Heart left ventricle (tissue), 16 donors: ENCODE measurements at regions of chr9 and their contacts with region 1.

Region 1: GRCh38 chr9:136928591-136928990 is 15.9 kb downstream of the FBXW5 start:
- DNase-seq: peak; percentile 64 to 82 (median 67)
- ATAC-seq: peak; percentile 87 to 91 (median 90)
- H3K4me3 ChIP-seq: peak overlapping the region in 6 of 12 donors; percentile 4 to 42 (median 17)
- H3K27ac ChIP-seq: peak overlapping the region; percentile 55 to 96 (median 84)
- H3K4me1 ChIP-seq: peaks cover 11 to 67% (median 53%) of the 10 kb centered on the region in 12 donors
- H3K27me3 ChIP-seq: no peaks in the 10 kb centered on the region
- CTCF ChIP-seq: peak in 5 of 12 donors; percentile 14 to 31 (median 25)
- POLR2A ChIP-seq: no peak

Region 2: GRCh38 chr9:136849038-136849959 is 79.3 kb before region 1 on chr9 and contains the start of gene PHPT1:
- intact Hi-C with region 1: loop called in 2 of 10 experiments (anchors 5 kb)
- DNase-seq: peak; percentile 99
- ATAC-seq: peak; percentile 84 to 94 (median 89)
- H3K4me3 ChIP-seq: peak within 1 kb of the TSS; percentile 63 to 93 (median 84)
- H3K27ac ChIP-seq: peak within 1 kb of the TSS; percentile 80 to 97 (median 92)
- H3K4me1 ChIP-seq: peaks cover 4 to 61% (median 27%) of the 10 kb centered on the region in 12 donors
- H3K27me3 ChIP-seq: peaks cover 0 to 28% (median 13%) of the 10 kb centered on the region in 9 donors
- CTCF ChIP-seq: no peak
- POLR2A ChIP-seq: peak; percentile 71 to 85
- total RNA-seq, gene PHPT1: 230 to 386 (median 266) TPM

Region 3: DNA sequence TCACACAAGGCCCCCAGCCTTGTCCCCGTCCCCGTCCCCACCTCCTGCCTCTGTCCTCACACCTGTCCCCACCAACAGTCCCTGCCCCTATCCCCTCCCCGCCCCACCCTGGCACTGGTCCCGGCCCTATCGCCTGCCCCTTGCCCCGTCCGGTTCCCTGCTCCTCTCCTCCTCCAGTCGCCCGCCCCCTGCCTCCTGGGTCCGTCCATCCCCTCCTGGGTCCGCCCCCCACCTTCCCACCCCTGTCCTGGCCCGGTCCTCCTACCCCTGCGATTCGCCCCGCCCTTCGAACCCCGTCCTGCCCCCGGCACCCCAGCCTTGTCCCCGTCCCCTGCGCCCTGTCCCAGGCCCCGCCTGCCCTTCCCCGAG is 62.9 kb before region 1 on chr9:
- intact Hi-C with region 1: loop called in 2 of 10 experiments (anchors 10 kb)
- DNase-seq: peak in 3 of 5 donors; percentile 25 to 49 (median 43)
- ATAC-seq: peak in 2 of 4 donors; percentile 36 to 43
- H3K4me3 ChIP-seq: peak overlapping the region; percentile 41 to 97 (median 82)
- H3K27ac ChIP-seq: peak overlapping the region in 11 of 12 donors; percentile 76 to 96 (median 90)
- H3K4me1 ChIP-seq: peaks cover 0 to 27% (median 19%) of the 10 kb centered on the region in 12 donors
- H3K27me3 ChIP-seq: no peaks in the 10 kb centered on the region
- CTCF ChIP-seq: no peak
- POLR2A ChIP-seq: no peak

Region 4: GRCh38 chr9:136885950-136886578 is 42.5 kb before region 1 on chr9 and contains the start of gene TRAF2:
- intact Hi-C with region 1: loop called in 5 of 10 experiments (anchors 5 to 10 kb)
- DNase-seq: peak; percentile 98 to 99 (median 99)
- ATAC-seq: peak; percentile 98 to 99 (median 98)
- H3K4me3 ChIP-seq: peak within 1 kb of the TSS; percentile 73 to 93 (median 84)
- H3K27ac ChIP-seq: peak within 1 kb of the TSS in 11 of 12 donors; percentile 73 to 93 (median 87)
- H3K4me1 ChIP-seq: peaks cover 5 to 56% (median 34%) of the 10 kb centered on the region in 12 donors
- H3K27me3 ChIP-seq: no peaks in the 10 kb centered on the region
- CTCF ChIP-seq: no peak
- POLR2A ChIP-seq: peak in 1 of 2 donors; percentile 85
- total RNA-seq, gene TRAF2: 6.3 to 14.7 (median 9.1) TPM

Region 5: DNA sequence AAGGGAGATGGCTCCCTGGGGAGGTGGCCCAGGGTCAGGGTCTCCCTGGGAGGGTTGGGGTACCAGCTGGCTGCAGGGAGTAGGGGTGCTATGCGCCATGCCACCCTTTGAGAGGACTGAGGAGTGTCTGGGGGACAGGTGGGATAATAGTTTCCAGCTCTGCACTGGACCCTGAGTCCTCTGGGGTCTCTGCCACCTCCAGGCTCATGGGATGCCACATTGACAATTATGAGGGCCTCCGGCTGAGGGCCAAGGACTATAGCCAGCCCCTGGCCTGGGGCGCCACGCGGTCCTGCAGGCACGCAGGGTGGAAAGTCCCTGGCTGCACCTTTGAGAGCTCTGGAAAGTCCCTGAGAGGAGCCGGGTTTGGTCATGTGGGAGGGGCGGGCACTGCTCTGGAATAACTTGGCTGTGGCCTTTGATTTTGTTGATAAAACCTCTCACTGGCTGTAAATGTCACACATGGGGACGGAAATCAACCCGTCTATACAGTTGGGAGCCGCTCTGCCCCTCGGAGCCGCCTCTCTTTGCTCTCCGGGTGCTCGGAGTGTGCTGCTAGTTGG is 26.3 kb before region 1 on chr9:
- intact Hi-C with region 1: loop called in 2 of 10 experiments (anchors 2 kb)
- DNase-seq: peak in 4 of 5 donors; percentile 78 to 85 (median 82)
- ATAC-seq: peak; percentile 84 to 94 (median 91)
- H3K4me3 ChIP-seq: peak overlapping the region in 5 of 12 donors; percentile 1 to 23 (median 11)
- H3K27ac ChIP-seq: peak overlapping the region; percentile 30 to 94 (median 80)
- H3K4me1 ChIP-seq: peaks cover 0 to 37% (median 32%) of the 10 kb centered on the region in 12 donors
- H3K27me3 ChIP-seq: no peaks in the 10 kb centered on the region
- CTCF ChIP-seq: no peak
- POLR2A ChIP-seq: peak in 1 of 2 donors; percentile 25